MCF 10A (cell line): ENCODE measurements at regions of chr17 and their contacts with region 1.

Region 1: DNA sequence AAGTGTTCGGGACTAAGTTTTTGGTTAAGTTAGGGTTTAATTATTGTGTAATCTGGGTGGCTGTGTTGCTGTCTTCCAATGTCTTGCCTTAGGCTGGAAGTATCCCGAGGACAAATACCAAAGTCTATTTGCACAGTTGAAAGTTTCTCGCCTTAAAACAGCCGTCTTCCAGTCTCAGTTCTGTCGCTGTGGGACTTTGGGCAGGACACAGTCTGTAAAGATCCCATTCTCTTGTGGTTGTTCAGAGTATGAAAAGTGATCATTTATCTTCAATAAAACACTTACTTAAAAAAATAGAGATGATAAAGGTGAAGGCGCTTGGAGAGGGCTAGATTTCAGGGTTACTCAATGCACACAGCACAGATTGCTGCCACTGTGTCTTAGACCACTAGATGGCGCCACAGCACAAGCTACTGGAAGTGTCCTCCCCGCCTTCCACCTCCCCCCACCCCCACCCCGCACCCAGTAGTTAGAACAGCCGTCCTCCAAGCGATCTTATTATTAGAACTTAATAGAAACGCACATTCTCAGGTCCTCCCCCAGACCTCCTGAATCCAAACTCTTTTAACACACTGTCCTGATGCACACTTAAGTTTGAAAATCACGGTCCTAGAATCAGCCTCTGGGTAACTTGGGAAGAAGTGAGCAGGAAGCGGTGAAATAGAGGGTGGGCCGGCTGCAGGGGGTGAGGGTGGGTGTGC is 45.9 kb downstream of the AKAP1 start:
- DNase-seq: peak; percentile 89
- H3K4me3 Mint-ChIP-seq: no peak overlapping the region
- H3K27ac Mint-ChIP-seq: no peak overlapping the region
- H3K4me1 Mint-ChIP-seq: peaks cover 5% of the 10 kb centered on the region
- H3K27me3 Mint-ChIP-seq: no peaks in the 10 kb centered on the region
- CTCF ChIP-seq: peak; percentile 85

Region 2: GRCh38 chr17:57747221-57748017 is 616.5 kb after region 1 on chr17:
- CTCF ChIA-PET with region 1: interaction called, 22 read pairs
- POLR2A ChIA-PET with region 1: interaction called, 3 read pairs
- intact Hi-C with region 1: loop called (anchors 1 kb)
- DNase-seq: peak; percentile 68
- H3K4me3 Mint-ChIP-seq: no peak overlapping the region
- H3K27ac Mint-ChIP-seq: no peak overlapping the region
- H3K4me1 Mint-ChIP-seq: no peaks in the 10 kb centered on the region
- H3K27me3 Mint-ChIP-seq: peaks cover 55% of the 10 kb centered on the region
- CTCF ChIP-seq: peak; percentile 77